ENCODE measurements at regions of chr13 and their contacts with region 1.

Region 1: GRCh38 chr13:30132623-30133553 is 174.5 kb downstream of the KATNAL1 start:
- DNase-seq: peak; percentile 99
- H3K4me3 Mint-ChIP-seq: no peak overlapping the region
- H3K27ac Mint-ChIP-seq: peak overlapping the region; percentile 76
- H3K4me1 Mint-ChIP-seq: peaks cover 13% of the 10 kb centered on the region
- H3K27me3 Mint-ChIP-seq: peaks cover 18% of the 10 kb centered on the region

Region 2: DNA sequence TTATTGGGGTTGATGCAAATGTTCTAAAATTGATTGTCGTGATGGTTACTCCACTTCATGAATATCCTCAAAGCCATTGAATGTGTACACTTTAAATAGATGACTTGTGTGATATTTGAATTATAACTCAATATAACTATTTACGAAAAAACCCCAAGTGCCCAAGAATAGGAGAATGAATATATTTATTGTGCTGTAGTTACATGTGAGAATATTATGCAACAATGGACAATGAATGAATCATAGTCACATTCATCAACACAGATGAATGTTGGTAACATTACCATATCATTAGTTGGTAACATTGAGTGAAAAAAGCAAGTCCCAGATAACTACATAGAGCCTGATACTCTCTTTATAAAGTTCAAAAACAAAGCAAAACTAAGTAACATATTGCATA is 154.7 kb before region 1 on chr13:
- CTCF ChIA-PET with region 1: no interaction called
- DNase-seq: no peak
- H3K4me3 Mint-ChIP-seq: no peak overlapping the region
- H3K27ac Mint-ChIP-seq: no peak overlapping the region
- H3K4me1 Mint-ChIP-seq: peaks cover 20% of the 10 kb centered on the region
- H3K27me3 Mint-ChIP-seq: peaks cover 9% of the 10 kb centered on the region

Region 3: GRCh38 chr13:30158774-30159445 is 26.0 kb after region 1 on chr13:
- CTCF ChIA-PET with region 1: interaction called, 144 read pairs
- DNase-seq: peak; percentile 36
- H3K4me3 Mint-ChIP-seq: no peak overlapping the region
- H3K27ac Mint-ChIP-seq: no peak overlapping the region
- H3K4me1 Mint-ChIP-seq: peaks cover 43% of the 10 kb centered on the region
- H3K27me3 Mint-ChIP-seq: peaks cover 5% of the 10 kb centered on the region

Region 4: DNA sequence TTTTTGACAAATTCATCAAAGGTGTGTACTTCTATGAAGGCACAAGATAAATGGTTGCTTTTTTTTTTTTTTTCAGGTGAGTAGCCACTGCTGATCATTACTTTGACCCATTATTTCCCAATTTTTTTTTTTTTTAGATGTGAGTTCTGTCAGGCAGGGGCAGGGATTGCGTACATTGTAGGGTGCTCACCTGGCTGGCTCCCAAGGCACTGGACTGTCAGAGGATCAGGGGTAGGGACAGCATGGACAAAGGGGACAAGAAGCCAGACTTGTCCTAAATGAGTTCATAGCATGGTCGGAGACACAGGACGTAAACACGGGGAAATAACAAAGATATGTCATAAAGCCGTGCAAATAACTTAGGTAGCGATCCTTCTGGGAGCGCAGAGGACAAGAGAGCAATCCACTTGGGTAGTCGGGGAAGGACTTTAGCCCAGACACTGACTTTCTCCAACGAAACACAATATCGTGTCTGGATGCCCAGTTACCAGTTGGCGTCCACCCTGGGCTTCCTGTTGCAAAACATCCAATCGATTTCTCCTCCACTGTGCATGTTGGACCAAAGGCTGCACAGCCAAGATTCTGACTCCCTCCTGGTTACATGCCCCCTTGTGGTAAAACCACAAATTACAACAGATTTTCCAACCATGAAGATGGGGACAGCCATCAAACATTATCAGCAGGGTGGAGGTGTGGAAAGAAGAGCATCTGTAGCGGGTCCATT is 201.9 kb after region 1 on chr13:
- CTCF ChIA-PET with region 1: interaction called, 48 read pairs
- DNase-seq: peak; percentile 31
- H3K4me3 Mint-ChIP-seq: no peak overlapping the region
- H3K27ac Mint-ChIP-seq: no peak overlapping the region
- H3K4me1 Mint-ChIP-seq: peaks cover 4% of the 10 kb centered on the region
- H3K27me3 Mint-ChIP-seq: peaks cover 3% of the 10 kb centered on the region

Region 5: GRCh38 chr13:30376426-30377311 is 243.8 kb after region 1 on chr13:
- CTCF ChIA-PET with region 1: interaction called, 10 read pairs
- DNase-seq: peak; percentile 85
- H3K4me3 Mint-ChIP-seq: peak overlapping the region; percentile 82
- H3K27ac Mint-ChIP-seq: peak overlapping the region; percentile 97
- H3K4me1 Mint-ChIP-seq: peaks cover 90% of the 10 kb centered on the region
- H3K27me3 Mint-ChIP-seq: no peaks in the 10 kb centered on the region

Region 6: GRCh38 chr13:30551189-30551588 is 418.3 kb after region 1 on chr13:
- CTCF ChIA-PET with region 1: interaction called, 10 read pairs
- DNase-seq: peak; percentile 41
- H3K4me3 Mint-ChIP-seq: no peak overlapping the region
- H3K27ac Mint-ChIP-seq: no peak overlapping the region
- H3K4me1 Mint-ChIP-seq: no peaks in the 10 kb centered on the region
- H3K27me3 Mint-ChIP-seq: no peaks in the 10 kb centered on the region